ENCODE measurements at regions of chr17 and their contacts with region 1.

Region 1: DNA sequence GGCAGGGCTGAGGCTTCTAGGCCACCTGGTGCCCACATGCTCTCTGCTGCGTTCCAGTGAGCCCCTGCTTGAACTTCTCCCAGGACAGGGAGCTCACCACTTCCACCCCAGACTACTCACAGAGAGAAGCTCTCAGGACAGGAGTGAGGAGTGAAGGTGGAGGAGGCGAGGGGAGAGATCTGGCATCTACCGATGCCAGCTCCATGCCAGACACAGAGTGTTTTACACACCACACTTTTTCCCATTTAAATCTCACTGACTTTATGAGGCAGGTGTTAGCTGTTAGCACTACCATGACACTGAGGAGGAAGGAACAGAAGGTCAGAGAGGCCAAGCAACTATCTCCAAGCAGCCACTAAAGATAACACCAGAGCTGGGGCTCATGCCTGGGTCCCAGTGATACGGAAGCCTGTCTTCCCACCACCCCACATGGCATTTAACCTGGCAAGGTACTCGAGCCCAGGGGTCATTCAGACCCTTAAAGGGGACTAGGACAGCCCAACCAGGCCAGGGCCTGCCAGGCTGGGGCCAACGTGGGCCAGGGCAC is 6.8 kb downstream of the FAM83G start:
- DNase-seq: no peak
- H3K4me3 Mint-ChIP-seq: no peak overlapping the region
- H3K27ac Mint-ChIP-seq: no peak overlapping the region
- H3K4me1 Mint-ChIP-seq: peaks cover 30% of the 10 kb centered on the region
- H3K27me3 Mint-ChIP-seq: no peaks in the 10 kb centered on the region

Region 2: GRCh38 chr17:18960803-18961511 is 36.8 kb before region 1 on chr17:
- CTCF ChIA-PET with region 1: interaction called, 12 read pairs
- POLR2A ChIA-PET with region 1: no interaction called
- DNase-seq: peak; percentile 75
- H3K4me3 Mint-ChIP-seq: no peak overlapping the region
- H3K27ac Mint-ChIP-seq: peak overlapping the region; percentile 43
- H3K4me1 Mint-ChIP-seq: peaks cover 19% of the 10 kb centered on the region
- H3K27me3 Mint-ChIP-seq: no peaks in the 10 kb centered on the region

Region 3: DNA sequence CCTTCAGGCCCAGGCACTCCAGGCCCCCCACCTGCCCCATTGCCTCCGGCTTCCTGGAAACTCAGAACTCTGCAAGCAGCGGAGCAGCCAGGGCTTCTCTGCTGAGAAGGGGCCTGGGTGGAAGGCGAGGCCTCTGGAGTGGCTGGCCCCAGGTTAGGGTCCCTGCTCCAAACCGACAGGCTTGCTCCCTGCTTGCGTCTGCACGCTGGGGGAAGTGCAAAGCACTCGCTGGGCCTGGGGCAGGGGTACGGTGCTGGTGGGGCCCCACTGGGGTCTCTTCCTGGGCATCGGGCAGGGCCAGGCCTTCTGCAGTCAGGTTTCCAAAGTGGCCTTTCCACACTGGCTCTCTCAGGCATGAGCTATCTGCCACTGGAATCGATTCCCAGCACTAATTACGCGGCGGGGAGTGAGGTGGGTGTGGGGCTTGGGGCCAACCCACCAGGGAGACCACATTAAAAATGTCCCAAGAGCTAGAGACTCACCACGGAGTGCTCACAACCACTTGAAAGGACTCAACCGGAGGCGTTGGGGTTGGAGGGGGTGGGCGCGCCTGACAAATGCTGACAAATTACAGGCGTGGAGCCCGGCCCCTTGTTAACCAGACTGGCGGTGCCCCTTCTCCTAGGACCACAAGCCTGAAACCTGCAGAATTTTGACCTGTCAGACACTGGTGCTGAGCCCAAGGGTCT is 11.0 kb before region 1 on chr17:
- CTCF ChIA-PET with region 1: interaction called, 13 read pairs
- POLR2A ChIA-PET with region 1: no interaction called
- DNase-seq: no peak
- H3K4me3 Mint-ChIP-seq: no peak overlapping the region
- H3K27ac Mint-ChIP-seq: peak overlapping the region; percentile 14
- H3K4me1 Mint-ChIP-seq: peaks cover 13% of the 10 kb centered on the region
- H3K27me3 Mint-ChIP-seq: no peaks in the 10 kb centered on the region

Region 4: GRCh38 chr17:19011111-19011505 is 13.4 kb after region 1 on chr17:
- CTCF ChIA-PET with region 1: no interaction called
- POLR2A ChIA-PET with region 1: no interaction called
- DNase-seq: no peak
- H3K4me3 Mint-ChIP-seq: no peak overlapping the region
- H3K27ac Mint-ChIP-seq: no peak overlapping the region
- H3K4me1 Mint-ChIP-seq: peaks cover 2% of the 10 kb centered on the region
- H3K27me3 Mint-ChIP-seq: peaks cover 7% of the 10 kb centered on the region

Measured in activated CD4-positive, alpha-beta T cell treated with anti-CD3 and anti-CD28 coated beads, Interleukin-2, amount 10 ng/mL, durations not matched to agents 7 days and 5 days (primary cell).